AG04450 (cell line): ENCODE measurements at regions of chr9 and their contacts with region 1.

Region 1: DNA sequence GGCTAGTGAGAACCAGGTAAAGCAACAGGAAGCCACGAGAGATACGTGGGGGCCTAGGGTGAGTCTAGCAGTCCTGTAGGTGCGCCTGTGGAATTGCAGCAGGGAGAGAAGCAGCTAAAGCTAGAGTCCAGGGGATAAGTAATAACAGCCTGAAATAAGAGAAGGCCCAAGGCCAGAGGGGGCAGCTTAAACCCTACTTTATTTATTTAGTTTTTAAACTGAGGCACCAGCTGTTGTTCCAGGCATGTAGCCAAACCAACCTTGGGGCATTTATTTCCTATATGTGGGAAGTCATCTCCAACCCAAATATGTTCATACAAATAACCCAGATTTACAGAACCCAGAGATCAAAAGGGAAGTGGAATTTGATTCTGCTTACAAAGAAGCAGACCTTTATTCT is 93.5 kb downstream of the GLDC start:
- DNase-seq: peak; percentile 69
- H3K4me3 ChIP-seq: no peak overlapping the region
- H3K27ac ChIP-seq: no peak overlapping the region
- H3K27me3 ChIP-seq: peaks cover 10% of the 10 kb centered on the region
- CTCF ChIP-seq: peak; percentile 47

Region 2: DNA sequence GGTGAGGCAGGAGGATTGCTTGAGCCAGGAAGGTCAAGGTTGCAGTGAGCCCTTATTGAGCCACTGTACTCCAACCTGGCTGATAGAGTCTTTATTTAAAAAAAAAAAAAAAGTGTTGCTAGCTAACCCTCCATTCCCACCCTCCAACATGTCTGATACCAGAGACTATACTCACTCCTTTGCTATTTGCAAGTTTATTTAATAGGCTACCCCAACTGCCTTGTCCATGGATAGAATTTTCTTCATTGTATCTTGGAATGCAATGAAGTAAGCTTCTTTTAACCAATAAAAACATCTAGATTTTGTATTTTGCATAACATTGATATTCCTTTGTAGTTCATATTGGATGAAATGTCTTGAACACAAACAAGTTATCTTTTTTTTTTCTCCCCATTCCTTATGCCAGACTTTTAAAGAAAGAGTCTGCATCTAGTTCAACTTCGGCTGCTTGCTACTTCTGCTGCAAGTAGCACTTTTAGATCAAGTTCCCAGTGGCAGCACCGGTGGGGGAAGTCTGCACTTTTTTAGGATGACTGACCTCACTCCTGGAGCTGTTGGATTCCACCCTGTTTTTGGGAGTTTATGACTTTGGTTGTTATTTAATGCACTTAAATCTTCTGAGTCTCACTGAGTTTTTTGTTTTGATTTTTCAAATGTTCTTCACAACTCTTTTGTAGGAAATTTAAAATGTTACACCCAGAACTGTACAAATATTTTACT is 26.5 kb before region 1 on chr9:
- CTCF ChIA-PET with region 1: no interaction called
- POLR2A ChIA-PET with region 1: interaction called, 16 read pairs
- DNase-seq: peak; percentile 45
- H3K4me3 ChIP-seq: no peak overlapping the region
- H3K27ac ChIP-seq: peak overlapping the region; percentile 68
- H3K27me3 ChIP-seq: no peaks in the 10 kb centered on the region
- CTCF ChIP-seq: no peak